ENCODE measurements at regions of chrX and their contacts with region 1.

Region 1: GRCh38 chrX:41084044-41084892 is 977 bp upstream of the USP9X start:
- DNase-seq: peak; percentile 94
- ATAC-seq: peak; percentile 68
- H3K4me3 Mint-ChIP-seq: peak overlapping the region; percentile 81
- H3K27ac Mint-ChIP-seq: peak overlapping the region; percentile 99
- H3K4me1 Mint-ChIP-seq: peaks cover 34% of the 10 kb centered on the region
- H3K27me3 Mint-ChIP-seq: no peaks in the 10 kb centered on the region
- CTCF ChIP-seq: no peak

Region 2: GRCh38 chrX:40809210-40809609 is 275.1 kb before region 1 on chrX:
- CTCF ChIA-PET with region 1: no interaction called
- POLR2A ChIA-PET with region 1: no interaction called
- DNase-seq: no peak
- ATAC-seq: no peak
- H3K4me3 Mint-ChIP-seq: no peak overlapping the region
- H3K27ac Mint-ChIP-seq: no peak overlapping the region
- H3K4me1 Mint-ChIP-seq: peaks cover 14% of the 10 kb centered on the region
- H3K27me3 Mint-ChIP-seq: no peaks in the 10 kb centered on the region
- CTCF ChIP-seq: no peak

Region 3: GRCh38 chrX:41027431-41027831 is 56.8 kb before region 1 on chrX:
- CTCF ChIA-PET with region 1: interaction called, 3 read pairs
- POLR2A ChIA-PET with region 1: interaction called, 20 read pairs
- DNase-seq: no peak
- ATAC-seq: no peak
- H3K4me3 Mint-ChIP-seq: peak overlapping the region; percentile 45
- H3K27ac Mint-ChIP-seq: peak overlapping the region; percentile 99
- H3K4me1 Mint-ChIP-seq: peaks cover 46% of the 10 kb centered on the region
- H3K27me3 Mint-ChIP-seq: no peaks in the 10 kb centered on the region
- CTCF ChIP-seq: no peak

Region 4: DNA sequence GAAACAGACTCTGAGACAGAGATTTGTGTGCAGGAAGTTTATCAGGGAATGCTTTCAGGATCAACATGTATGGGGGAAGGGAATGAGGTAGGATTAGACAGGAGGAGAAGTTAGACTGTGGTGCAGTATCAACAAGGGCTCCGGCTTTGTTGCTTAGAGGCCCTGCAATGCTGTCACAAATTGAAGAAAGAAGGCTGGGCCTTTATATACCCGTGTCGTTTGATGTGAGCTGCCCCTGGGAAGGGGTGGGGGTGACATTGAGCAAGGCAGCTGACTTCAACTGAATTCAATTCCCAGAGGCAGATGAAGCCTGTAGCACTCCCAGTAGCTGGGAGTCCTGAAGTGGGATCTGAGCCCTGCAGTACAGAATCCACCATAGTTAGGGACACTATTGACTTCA is 28.5 kb before region 1 on chrX:
- CTCF ChIA-PET with region 1: no interaction called
- POLR2A ChIA-PET with region 1: no interaction called
- DNase-seq: no peak
- ATAC-seq: no peak
- H3K4me3 Mint-ChIP-seq: no peak overlapping the region
- H3K27ac Mint-ChIP-seq: no peak overlapping the region
- H3K4me1 Mint-ChIP-seq: peaks cover 8% of the 10 kb centered on the region; the same call in 1 of the 2 replicates
- H3K27me3 Mint-ChIP-seq: no peaks in the 10 kb centered on the region
- CTCF ChIP-seq: no peak

Region 5: GRCh38 chrX:41137589-41137988 is 53.3 kb after region 1 on chrX:
- CTCF ChIA-PET with region 1: no interaction called
- POLR2A ChIA-PET with region 1: no interaction called
- DNase-seq: no peak
- ATAC-seq: no peak
- H3K4me3 Mint-ChIP-seq: no peak overlapping the region
- H3K27ac Mint-ChIP-seq: no peak overlapping the region
- H3K4me1 Mint-ChIP-seq: peaks cover 17% of the 10 kb centered on the region
- H3K27me3 Mint-ChIP-seq: no peaks in the 10 kb centered on the region
- CTCF ChIP-seq: no peak

Region 6: GRCh38 chrX:41377624-41378023 is 293.4 kb after region 1 on chrX:
- CTCF ChIA-PET with region 1: no interaction called
- POLR2A ChIA-PET with region 1: no interaction called
- DNase-seq: no peak
- ATAC-seq: no peak
- H3K4me3 Mint-ChIP-seq: no peak overlapping the region
- H3K27ac Mint-ChIP-seq: no peak overlapping the region
- H3K4me1 Mint-ChIP-seq: peaks cover 5% of the 10 kb centered on the region
- H3K27me3 Mint-ChIP-seq: no peaks in the 10 kb centered on the region
- CTCF ChIP-seq: no peak

Measured in WTC11 (cell line).